Left ventricle myocardium superior (tissue), 1 donor: ENCODE measurements at regions of chr11 and their contacts with region 1.

Region 1: DNA sequence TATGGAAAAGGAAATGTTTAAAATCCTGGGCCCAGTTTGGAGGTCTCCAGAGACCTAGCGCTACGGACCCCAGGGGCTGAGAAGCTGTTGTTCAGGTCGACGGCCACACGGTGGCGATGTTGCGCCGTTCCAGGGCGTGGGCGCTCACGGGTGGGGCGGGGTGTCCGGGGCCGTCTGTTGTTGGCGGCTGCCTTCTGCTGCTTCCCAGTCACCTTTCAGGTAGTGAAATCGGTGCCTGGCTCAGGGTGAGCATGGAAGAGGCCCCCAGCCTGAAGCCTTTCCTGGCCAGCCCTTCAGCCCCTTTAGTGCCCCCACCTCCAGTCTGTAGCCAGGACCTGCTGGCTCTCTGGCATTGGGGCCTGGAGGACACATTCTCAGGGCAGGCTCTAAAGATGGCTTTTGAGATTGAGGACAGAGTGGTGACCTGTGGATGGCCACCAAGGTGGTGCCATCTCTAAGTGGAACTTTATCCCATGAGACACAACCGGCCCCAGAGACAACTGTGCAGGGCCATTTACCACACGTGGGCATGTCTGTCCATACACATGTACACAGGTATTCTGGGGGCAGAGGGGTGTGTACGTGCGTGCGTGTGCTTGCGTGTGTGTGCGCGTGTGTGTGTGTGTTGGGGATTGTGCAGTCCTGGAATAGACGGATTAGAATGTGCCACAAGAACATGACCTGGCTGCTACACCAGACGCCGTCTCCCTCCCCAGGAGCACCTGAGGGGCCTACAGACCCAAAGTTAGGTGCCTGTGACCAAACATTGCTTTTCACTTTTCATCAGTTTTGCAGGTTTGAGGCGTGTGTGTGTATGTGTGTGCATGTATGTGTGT is 53.8 kb downstream of the ST14 start:
- DNase-seq: peak; percentile 82
- ATAC-seq: peak; percentile 86

Region 2: GRCh38 chr11:130427581-130428315 is 214.4 kb after region 1 on chr11:
- intact Hi-C with region 1: loop called (anchors 10 kb)
- DNase-seq: peak; percentile 44
- ATAC-seq: peak; percentile 32

Region 3: GRCh38 chr11:130872981-130873380 is 659.6 kb after region 1 on chr11:
- intact Hi-C with region 1: loop called (anchors 10 kb)
- DNase-seq: no peak
- ATAC-seq: peak; percentile 15